GM18951 (cell line): ENCODE measurements at regions of chr1 and their contacts with region 1.

Region 1: GRCh38 chr1:11031624-11032262 is 15.3 kb downstream of the MASP2 start:
- POLR2A ChIP-seq: no peak

Region 2: DNA sequence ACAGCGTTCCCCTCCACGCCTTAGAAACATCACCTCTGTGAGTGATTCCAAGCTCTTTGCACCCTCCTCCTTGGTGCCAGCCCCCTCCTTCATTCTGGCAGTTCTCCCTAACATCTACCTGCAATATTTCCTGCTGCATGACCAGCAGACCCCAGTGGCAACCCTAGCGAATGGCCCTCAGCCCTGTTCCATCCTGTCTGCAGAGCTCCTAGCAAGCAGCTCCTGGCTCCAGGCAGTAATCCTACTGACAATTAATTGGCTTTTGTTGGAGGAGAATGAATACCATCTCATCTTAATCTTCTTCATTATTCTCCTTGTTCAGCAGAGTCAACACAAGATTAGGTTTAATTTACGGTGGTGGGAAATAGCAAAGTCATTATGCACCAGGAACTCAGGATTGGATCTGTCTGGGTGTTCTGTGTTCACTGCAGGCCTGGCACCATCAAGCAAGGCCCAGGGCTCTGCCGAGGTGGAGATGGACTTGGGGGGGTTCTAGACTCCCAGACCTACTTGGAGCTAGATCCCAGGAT is 610.1 kb after region 1 on chr1:
- in situ Hi-C with region 1: loop called (anchors 5 kb)
- POLR2A ChIP-seq: no peak